ENCODE measurements at regions of chr4 and their contacts with region 1.

Region 1: DNA sequence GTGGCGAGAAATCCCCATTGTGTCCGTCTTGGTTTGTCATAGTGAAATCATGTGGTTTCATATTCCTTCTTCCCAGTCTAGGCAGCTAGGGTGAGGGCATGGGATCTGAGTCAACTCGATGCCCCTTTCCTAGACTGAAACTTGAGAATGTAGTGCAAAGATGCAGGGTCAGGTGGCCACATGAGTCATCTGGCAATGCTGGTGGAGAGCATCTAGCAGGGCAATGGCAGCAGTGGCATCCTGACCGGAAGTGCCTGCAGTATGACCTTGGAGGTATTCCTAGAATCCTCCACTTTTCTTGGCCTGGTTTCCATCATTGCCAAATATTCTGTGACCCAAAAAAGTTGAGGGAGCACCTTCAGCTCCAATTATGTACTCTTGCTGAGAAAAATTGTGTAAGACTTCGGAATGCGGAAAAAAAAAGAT is 39.1 kb upstream of the TMEM184C start:
- DNase-seq: peak; percentile 77 to 84
- ATAC-seq: peak; percentile 97 to 100
- H3K4me3 ChIP-seq: no peak overlapping the region
- H3K27ac ChIP-seq: peak overlapping the region; percentile 55 to 80; a peak in 5 of 6 replicates
- H3K4me1 ChIP-seq: peaks cover 26% of the 10 kb centered on the region
- CTCF ChIP-seq: no peak
- EP300 ChIP-seq: no peak
- POLR2A ChIP-seq: no peak
- RAD21 ChIP-seq: no peak

Region 2: GRCh38 chr4:147398556-147398955 is 179.5 kb before region 1 on chr4:
- CTCF ChIA-PET with region 1: no interaction called
- POLR2A ChIA-PET with region 1: no interaction called
- DNase-seq: no peak
- ATAC-seq: no peak
- H3K4me3 ChIP-seq: no peak overlapping the region
- H3K27ac ChIP-seq: no peak overlapping the region
- H3K4me1 ChIP-seq: no peaks in the 10 kb centered on the region
- CTCF ChIP-seq: no peak
- EP300 ChIP-seq: no peak
- POLR2A ChIP-seq: no peak
- RAD21 ChIP-seq: no peak

Region 3: GRCh38 chr4:147518846-147519767 is 59.0 kb before region 1 on chr4:
- CTCF ChIA-PET with region 1: interaction called, 13 read pairs
- POLR2A ChIA-PET with region 1: no interaction called
- DNase-seq: peak; percentile 23 to 67
- ATAC-seq: peak; percentile 78 to 88; a peak in 4 of 6 replicates
- H3K4me3 ChIP-seq: no peak overlapping the region
- H3K27ac ChIP-seq: no peak overlapping the region
- H3K4me1 ChIP-seq: no peaks in the 10 kb centered on the region
- CTCF ChIP-seq: peak; percentile 73
- EP300 ChIP-seq: no peak
- POLR2A ChIP-seq: no peak
- RAD21 ChIP-seq: peak; percentile 69 to 74

Region 4: GRCh38 chr4:147617173-147617840 is 39.2 kb after region 1 on chr4 and contains the start of gene TMEM184C:
- CTCF ChIA-PET with region 1: no interaction called
- POLR2A ChIA-PET with region 1: no interaction called
- DNase-seq: peak; percentile 89 to 92
- ATAC-seq: peak; percentile 99 to 100
- H3K4me3 ChIP-seq: peak within 1 kb of the TSS; percentile 89
- H3K27ac ChIP-seq: peak within 1 kb of the TSS; percentile 87 to 90
- H3K4me1 ChIP-seq: peaks cover 5% of the 10 kb centered on the region; the same call in 1 of the 3 replicates
- CTCF ChIP-seq: no peak
- EP300 ChIP-seq: no peak
- POLR2A ChIP-seq: peak; percentile 71
- RAD21 ChIP-seq: no peak
- polyA plus RNA-seq, gene TMEM184C: 25.2 and 30.5 TPM in 2 replicates

Region 5: DNA sequence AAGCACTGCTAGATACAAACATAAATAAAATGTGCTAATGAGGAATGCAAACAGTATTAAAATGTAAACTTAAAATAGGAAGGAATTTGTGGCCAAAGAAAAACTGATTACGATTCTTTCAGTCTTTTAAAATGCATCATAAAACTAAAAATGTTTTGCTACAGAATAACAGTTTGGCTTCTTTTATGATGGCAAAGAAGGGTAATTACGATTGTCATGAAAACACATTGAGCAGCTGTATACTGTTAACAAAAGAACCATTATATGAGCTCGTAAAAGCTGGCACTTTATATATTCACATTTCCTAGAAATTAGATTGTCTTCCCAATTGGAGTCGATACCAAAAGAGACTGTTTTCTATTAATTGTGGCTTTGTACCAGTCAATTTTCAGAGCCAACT is 573.7 kb after region 1 on chr4:
- CTCF ChIA-PET with region 1: no interaction called
- POLR2A ChIA-PET with region 1: no interaction called
- DNase-seq: no peak
- ATAC-seq: no peak
- H3K4me3 ChIP-seq: no peak overlapping the region
- H3K27ac ChIP-seq: no peak overlapping the region
- H3K4me1 ChIP-seq: no peaks in the 10 kb centered on the region
- CTCF ChIP-seq: no peak
- EP300 ChIP-seq: no peak
- POLR2A ChIP-seq: no peak
- RAD21 ChIP-seq: no peak